ENCODE measurements at regions of chr3 and their contacts with region 1.

Region 1: GRCh38 chr3:123028233-123028828 is 768 bp upstream of the SEMA5B start:
- DNase-seq: peak; percentile 37 to 46
- H3K4me3 ChIP-seq: peak overlapping the region; percentile 58
- H3K27ac ChIP-seq: no peak overlapping the region
- H3K4me1 ChIP-seq: peaks cover 4% of the 10 kb centered on the region
- H3K27me3 ChIP-seq: peaks cover 55% of the 10 kb centered on the region
- CTCF ChIP-seq: peak; percentile 67

Region 2: GRCh38 chr3:121545574-121546455 is 1482.5 kb before region 1 on chr3 and contains the start of gene POLQ:
- CTCF ChIA-PET with region 1: no interaction called
- POLR2A ChIA-PET with region 1: no interaction called
- intact Hi-C with region 1: loop called (anchors 5 kb)
- DNase-seq: peak; percentile 85 to 88
- H3K4me3 ChIP-seq: peak within 1 kb of the TSS; percentile 62
- H3K27ac ChIP-seq: peak within 1 kb of the TSS; percentile 24; the same call in 1 of the 2 replicates
- H3K4me1 ChIP-seq: peaks cover 8% of the 10 kb centered on the region; the same call in 1 of the 2 replicates
- H3K27me3 ChIP-seq: no peaks in the 10 kb centered on the region
- CTCF ChIP-seq: no peak
- total RNA-seq, gene POLQ: 14.3 and 15.6 TPM in 2 replicates

Region 3: GRCh38 chr3:122564155-122564912 is 464.0 kb before region 1 on chr3 and contains the starts of genes DTX3L and PARP9:
- CTCF ChIA-PET with region 1: no interaction called
- POLR2A ChIA-PET with region 1: no interaction called
- intact Hi-C with region 1: loop called (anchors 2 kb)
- DNase-seq: peak; percentile 64 to 82
- H3K4me3 ChIP-seq: peak within 1 kb of the TSS; percentile 85
- H3K27ac ChIP-seq: peak within 1 kb of the TSS; percentile 72
- H3K4me1 ChIP-seq: peaks cover 14% of the 10 kb centered on the region; the same call in 1 of the 2 replicates
- H3K27me3 ChIP-seq: no peaks in the 10 kb centered on the region
- CTCF ChIP-seq: no peak
- total RNA-seq, gene DTX3L: 30.0 and 41.7 TPM in 2 replicates
- total RNA-seq, gene PARP9: 15.0 and 21.1 TPM in 2 replicates

Region 4: GRCh38 chr3:122754929-122755328 is 273.4 kb before region 1 on chr3:
- CTCF ChIA-PET with region 1: interaction called, 3 read pairs
- POLR2A ChIA-PET with region 1: no interaction called
- intact Hi-C with region 1: loop called (anchors 5 kb)
- DNase-seq: peak; percentile 17 to 44
- H3K4me3 ChIP-seq: no peak overlapping the region
- H3K27ac ChIP-seq: no peak overlapping the region
- H3K4me1 ChIP-seq: no peaks in the 10 kb centered on the region
- H3K27me3 ChIP-seq: no peaks in the 10 kb centered on the region
- CTCF ChIP-seq: peak; percentile 79

Region 5: GRCh38 chr3:122858373-122858772 is 170.0 kb before region 1 on chr3:
- CTCF ChIA-PET with region 1: interaction called, 4 read pairs
- POLR2A ChIA-PET with region 1: no interaction called
- intact Hi-C with region 1: loop called (anchors 2 kb)
- DNase-seq: no peak
- H3K4me3 ChIP-seq: no peak overlapping the region
- H3K27ac ChIP-seq: 0 out of 2 replicates have a peak overlapping the region, but pooled peaks have one; percentile 64
- H3K4me1 ChIP-seq: peaks cover 19% of the 10 kb centered on the region
- H3K27me3 ChIP-seq: no peaks in the 10 kb centered on the region
- CTCF ChIP-seq: peak; percentile 49; the same call in 1 of the 2 replicates

Region 6: DNA sequence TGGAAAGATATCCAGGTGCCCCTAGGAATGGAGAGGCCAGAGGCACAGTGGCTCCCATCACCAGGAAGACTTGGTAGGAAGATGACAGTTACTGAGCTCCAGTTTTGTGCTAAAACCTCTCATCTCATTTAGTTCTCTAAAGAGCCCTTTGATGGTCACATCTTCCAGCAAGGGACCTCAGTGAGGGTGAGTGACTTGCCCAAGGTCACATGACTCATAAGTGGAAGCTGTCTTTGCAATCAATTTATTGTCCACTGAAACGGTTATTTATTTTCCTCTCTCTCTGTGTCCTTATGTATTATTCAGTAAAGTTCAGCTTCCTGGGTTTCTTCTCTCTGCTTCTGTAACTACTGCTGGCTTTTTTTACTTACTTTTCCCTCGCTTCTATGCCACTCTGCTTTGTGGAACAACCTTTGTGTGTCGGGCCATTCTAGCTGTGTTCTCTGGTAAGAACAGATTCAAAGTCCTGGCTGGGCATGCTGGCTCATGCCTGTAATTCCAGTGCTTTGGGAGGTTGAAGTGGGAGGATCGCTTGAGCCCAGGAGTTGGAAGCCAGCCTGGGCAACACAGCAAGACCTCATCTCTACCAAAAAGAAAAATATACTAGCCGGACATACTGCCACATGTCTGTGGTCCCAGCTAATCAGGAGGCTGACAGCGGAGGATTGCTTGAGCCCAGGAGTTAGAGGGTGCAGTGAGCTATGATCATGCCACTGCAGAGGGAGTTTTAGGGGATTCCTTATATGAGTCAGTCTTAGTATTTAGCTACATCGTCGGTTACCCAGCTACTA is 94.4 kb after region 1 on chr3:
- CTCF ChIA-PET with region 1: no interaction called
- POLR2A ChIA-PET with region 1: no interaction called
- intact Hi-C with region 1: loop called (anchors 10 kb)
- DNase-seq: no peak
- H3K4me3 ChIP-seq: no peak overlapping the region
- H3K27ac ChIP-seq: no peak overlapping the region
- H3K4me1 ChIP-seq: no peaks in the 10 kb centered on the region
- H3K27me3 ChIP-seq: no peaks in the 10 kb centered on the region
- CTCF ChIP-seq: no peak

Region 7: DNA sequence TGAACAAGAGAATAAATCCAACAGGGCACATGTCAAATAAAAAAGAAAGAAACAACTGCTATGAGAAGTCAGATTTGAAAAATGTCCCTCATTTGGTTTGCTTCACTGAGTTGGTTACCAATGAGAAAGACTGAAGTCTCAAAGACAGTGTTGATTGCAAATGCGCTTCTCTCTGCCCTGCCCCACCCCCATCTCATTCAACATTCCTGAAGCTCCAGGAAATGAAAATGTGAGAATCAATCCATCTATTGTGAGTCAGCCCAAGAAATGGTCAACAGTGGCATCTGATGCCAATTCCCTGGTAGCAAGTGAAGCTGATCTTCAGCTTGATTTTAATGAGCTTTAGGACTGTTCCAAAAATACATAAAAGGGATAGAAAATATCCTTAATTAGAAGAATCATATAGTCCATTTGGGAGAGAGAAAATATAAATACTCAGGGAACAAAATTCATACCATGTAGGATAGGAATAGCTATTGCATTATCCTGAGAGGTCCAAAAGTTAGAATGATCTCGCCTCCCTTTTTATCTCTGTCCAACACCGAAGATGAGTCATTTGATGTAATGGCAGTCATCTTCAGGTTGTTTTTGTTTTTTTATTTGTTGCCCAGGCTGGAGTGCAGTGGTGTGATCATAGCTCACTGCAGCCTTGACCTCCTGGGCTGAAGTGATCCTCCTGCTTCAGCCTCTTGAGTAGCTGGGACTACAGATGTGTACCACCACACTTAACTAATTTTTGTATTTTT is 1501.7 kb after region 1 on chr3:
- CTCF ChIA-PET with region 1: no interaction called
- POLR2A ChIA-PET with region 1: no interaction called
- intact Hi-C with region 1: no loop called
- DNase-seq: no peak
- H3K4me3 ChIP-seq: no peak overlapping the region
- H3K27ac ChIP-seq: no peak overlapping the region
- H3K4me1 ChIP-seq: no peaks in the 10 kb centered on the region
- H3K27me3 ChIP-seq: peaks cover 62% of the 10 kb centered on the region
- CTCF ChIP-seq: no peak